GM12878 (cell line): ENCODE measurements at regions of chr1 and their contacts with region 1.

Region 1: GRCh38 chr1:160711602-160712311 is at the start of gene CD48:
- DNase-seq: no peak
- ATAC-seq: peak; percentile 56
- H3K4me3 ChIP-seq: peak within 1 kb of the TSS; percentile 93
- H3K27ac ChIP-seq: peak within 1 kb of the TSS; percentile 100
- H3K4me1 ChIP-seq: peaks cover 18% of the 10 kb centered on the region
- H3K27me3 ChIP-seq: no peaks in the 10 kb centered on the region
- CTCF ChIP-seq: no peak
- EP300 ChIP-seq: no peak; a peak in 2 of 4 replicates
- POLR2A ChIP-seq: peak; percentile 81
- RAD21 ChIP-seq: no peak
- polyA plus RNA-seq, gene CD48: 667 to 776 TPM

Region 2: GRCh38 chr1:160618763-160619274 is 92.9 kb before region 1 on chr1:
- CTCF ChIA-PET with region 1: interaction called, 10 read pairs
- POLR2A ChIA-PET with region 1: interaction called, 9 read pairs
- RAD21 ChIA-PET with region 1: interaction called, 5 read pairs
- SMC1A ChIA-PET with region 1: interaction called, 10 read pairs
- in situ Hi-C with region 1: no loop called
- intact Hi-C with region 1: no loop called
- DNase-seq: no peak
- ATAC-seq: peak; percentile 54
- H3K4me3 ChIP-seq: no peak overlapping the region
- H3K27ac ChIP-seq: no peak overlapping the region; the same call in 1 of the 2 replicates
- H3K4me1 ChIP-seq: peaks cover 28% of the 10 kb centered on the region
- H3K27me3 ChIP-seq: no peaks in the 10 kb centered on the region
- CTCF ChIP-seq: peak; percentile 72 to 88 (median 82)
- EP300 ChIP-seq: no peak
- POLR2A ChIP-seq: no peak
- RAD21 ChIP-seq: peak; percentile 75

Region 3: DNA sequence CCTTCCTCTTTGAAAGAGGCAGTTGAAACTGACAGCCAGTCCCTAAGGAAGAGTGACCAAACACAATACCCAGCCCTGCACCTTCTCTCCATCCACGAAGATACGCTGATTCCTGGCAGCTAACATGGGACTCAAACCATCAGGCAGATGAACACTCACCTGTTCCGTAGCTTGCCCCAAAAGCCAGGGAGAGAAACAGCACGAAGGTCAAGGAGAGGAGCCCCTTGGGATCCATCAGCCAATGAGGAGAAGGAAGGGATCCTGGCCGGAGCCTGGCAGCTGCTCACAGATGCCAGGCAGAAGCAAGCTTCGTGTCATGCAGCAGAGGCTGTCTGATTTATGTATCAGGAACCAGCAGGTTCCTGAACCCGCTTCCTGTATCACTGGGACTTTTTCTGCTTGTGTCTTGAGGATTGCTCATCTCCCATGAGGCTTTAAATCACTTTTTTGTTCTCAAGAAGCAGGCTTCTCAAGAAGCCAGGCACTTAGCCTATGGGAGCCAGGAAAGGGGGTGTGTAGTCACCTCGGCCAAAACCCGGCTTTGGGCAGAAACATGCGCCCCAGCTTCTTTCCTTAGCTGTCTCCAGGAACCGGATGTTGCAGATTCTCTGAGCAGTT is 64.9 kb before region 1 on chr1 and contains the start of gene SLAMF1:
- CTCF ChIA-PET with region 1: interaction called, 18 read pairs
- POLR2A ChIA-PET with region 1: interaction called, 16 read pairs
- RAD21 ChIA-PET with region 1: interaction called, 22 read pairs
- SMC1A ChIA-PET with region 1: interaction called, 36 read pairs
- in situ Hi-C with region 1: no loop called
- intact Hi-C with region 1: loop called (anchors 5 kb)
- DNase-seq: peak; percentile 95
- ATAC-seq: peak; percentile 63
- H3K4me3 ChIP-seq: peak within 1 kb of the TSS; percentile 95
- H3K27ac ChIP-seq: peak within 1 kb of the TSS; percentile 95
- H3K4me1 ChIP-seq: peaks cover 19% of the 10 kb centered on the region
- H3K27me3 ChIP-seq: no peaks in the 10 kb centered on the region
- CTCF ChIP-seq: no peak
- EP300 ChIP-seq: peak; percentile 5 to 19; a peak in 1 of 4 replicates
- POLR2A ChIP-seq: peak; percentile 82
- RAD21 ChIP-seq: no peak
- polyA plus RNA-seq, gene SLAMF1: 128 to 145 TPM

Region 4: DNA sequence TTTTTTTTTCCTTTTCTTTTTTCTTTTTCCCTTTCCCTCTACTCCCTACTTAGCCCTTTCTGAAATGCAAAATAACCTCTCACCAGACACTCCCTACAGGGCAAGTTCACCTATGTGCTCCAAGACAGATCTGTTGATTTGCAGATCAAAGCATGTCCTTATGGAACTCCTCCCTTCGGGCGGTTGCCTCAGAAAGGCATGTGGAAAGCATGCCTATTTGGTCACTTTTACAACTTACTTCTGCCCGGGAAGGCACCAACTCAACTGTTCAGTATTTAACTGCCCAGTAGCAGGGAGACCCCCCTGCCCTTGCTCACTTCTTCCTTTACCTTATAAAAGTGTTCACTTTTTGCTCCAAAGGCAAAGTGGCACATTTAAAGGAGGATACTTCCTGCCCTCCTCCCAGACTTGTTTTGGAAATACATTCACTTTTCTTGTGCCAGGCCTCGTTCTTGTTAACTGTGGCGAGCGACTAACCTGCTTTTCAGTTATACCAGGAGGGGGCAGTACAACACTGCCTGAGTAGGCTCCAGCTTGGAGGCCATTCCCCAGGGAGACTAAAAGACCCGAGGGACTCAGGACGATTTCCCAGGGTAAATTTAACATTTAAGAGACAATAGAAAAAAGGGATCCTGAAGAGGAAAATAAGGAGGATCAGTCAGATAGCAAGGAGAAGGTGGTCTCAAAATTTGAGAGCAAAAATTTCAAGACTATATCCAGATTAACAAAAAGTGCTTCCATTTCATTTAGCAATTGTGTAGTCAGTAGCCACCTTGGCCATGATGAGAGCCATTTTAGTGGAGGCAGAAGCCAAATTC is 14.9 kb after region 1 on chr1:
- CTCF ChIA-PET with region 1: interaction called, 102 read pairs
- POLR2A ChIA-PET with region 1: interaction called, 73 read pairs
- RAD21 ChIA-PET with region 1: interaction called, 74 read pairs
- SMC1A ChIA-PET with region 1: interaction called, 149 read pairs
- in situ Hi-C with region 1: no loop called
- intact Hi-C with region 1: loop called (anchors 1 kb)
- DNase-seq: no peak
- ATAC-seq: peak; percentile 80
- H3K4me3 ChIP-seq: no peak overlapping the region
- H3K27ac ChIP-seq: peak overlapping the region; percentile 85
- H3K4me1 ChIP-seq: peaks cover 40% of the 10 kb centered on the region
- H3K27me3 ChIP-seq: no peaks in the 10 kb centered on the region
- CTCF ChIP-seq: peak; percentile 81 to 92 (median 91); a peak in 5 of 6 replicates
- EP300 ChIP-seq: no peak
- POLR2A ChIP-seq: no peak
- RAD21 ChIP-seq: peak; percentile 99

Region 5: DNA sequence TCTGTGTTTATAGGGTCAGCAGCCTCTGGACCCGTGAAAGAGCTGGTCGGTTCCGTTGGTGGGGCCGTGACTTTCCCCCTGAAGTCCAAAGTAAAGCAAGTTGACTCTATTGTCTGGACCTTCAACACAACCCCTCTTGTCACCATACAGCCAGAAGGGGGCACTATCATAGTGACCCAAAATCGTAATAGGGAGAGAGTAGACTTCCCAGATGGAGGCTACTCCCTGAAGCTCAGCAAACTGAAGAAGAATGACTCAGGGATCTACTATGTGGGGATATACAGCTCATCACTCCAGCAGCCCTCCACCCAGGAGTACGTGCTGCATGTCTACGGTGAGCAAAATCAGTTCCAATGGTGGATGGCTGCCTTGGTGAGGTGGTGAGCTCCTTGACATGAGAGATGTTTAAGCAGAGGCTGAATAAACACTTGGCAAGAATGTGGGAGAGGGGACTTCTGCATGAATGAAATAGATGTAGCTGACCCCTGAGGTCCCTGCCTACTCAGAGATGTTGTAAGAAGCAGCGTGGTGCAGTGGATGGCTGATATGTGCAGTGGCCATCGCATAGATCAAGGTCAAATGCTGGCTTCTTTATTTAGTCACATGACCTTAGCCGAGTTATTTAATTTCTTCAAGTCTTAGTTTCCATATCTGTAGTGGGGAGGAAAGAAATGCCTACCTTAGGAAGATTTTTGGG is 36.6 kb after region 1 on chr1:
- CTCF ChIA-PET with region 1: interaction called, 25 read pairs
- POLR2A ChIA-PET with region 1: interaction called, 39 read pairs
- RAD21 ChIA-PET with region 1: interaction called, 26 read pairs
- SMC1A ChIA-PET with region 1: interaction called, 68 read pairs
- in situ Hi-C with region 1: no loop called
- intact Hi-C with region 1: no loop called
- DNase-seq: no peak
- ATAC-seq: no peak
- H3K4me3 ChIP-seq: no peak overlapping the region
- H3K27ac ChIP-seq: no peak overlapping the region
- H3K4me1 ChIP-seq: peaks cover 51% of the 10 kb centered on the region
- H3K27me3 ChIP-seq: no peaks in the 10 kb centered on the region
- CTCF ChIP-seq: peak; percentile 18 to 47 (median 38); a peak in 4 of 6 replicates
- EP300 ChIP-seq: no peak
- POLR2A ChIP-seq: no peak; the same call in 1 of the 2 replicates
- RAD21 ChIP-seq: no peak

Region 6: GRCh38 chr1:161192476-161193465 is 481.0 kb after region 1 on chr1:
- CTCF ChIA-PET with region 1: no interaction called
- POLR2A ChIA-PET with region 1: no interaction called
- RAD21 ChIA-PET with region 1: no interaction called
- SMC1A ChIA-PET with region 1: no interaction called
- in situ Hi-C with region 1: no loop called
- intact Hi-C with region 1: no loop called
- DNase-seq: no peak
- ATAC-seq: peak; percentile 94
- H3K4me3 ChIP-seq: no peak overlapping the region
- H3K27ac ChIP-seq: no peak overlapping the region
- H3K4me1 ChIP-seq: peaks cover 19% of the 10 kb centered on the region
- H3K27me3 ChIP-seq: no peaks in the 10 kb centered on the region
- CTCF ChIP-seq: peak; percentile 89 to 95 (median 89)
- EP300 ChIP-seq: no peak
- POLR2A ChIP-seq: no peak
- RAD21 ChIP-seq: peak; percentile 84